Activated B cell treated with CpG ODN at 0.5 μM for 24 hours (primary cell): ENCODE measurements at regions of chr4 and their contacts with region 1.

Region 1: GRCh38 chr4:20395160-20395773 is 143.6 kb downstream of the SLIT2 start:
- DNase-seq: no peak
- ATAC-seq: no peak
- H3K4me3 Mint-ChIP-seq: no peak overlapping the region
- H3K27ac Mint-ChIP-seq: no peak overlapping the region
- H3K4me1 Mint-ChIP-seq: no peaks in the 10 kb centered on the region
- H3K27me3 Mint-ChIP-seq: no peaks in the 10 kb centered on the region
- CTCF ChIP-seq: no peak

Region 2: DNA sequence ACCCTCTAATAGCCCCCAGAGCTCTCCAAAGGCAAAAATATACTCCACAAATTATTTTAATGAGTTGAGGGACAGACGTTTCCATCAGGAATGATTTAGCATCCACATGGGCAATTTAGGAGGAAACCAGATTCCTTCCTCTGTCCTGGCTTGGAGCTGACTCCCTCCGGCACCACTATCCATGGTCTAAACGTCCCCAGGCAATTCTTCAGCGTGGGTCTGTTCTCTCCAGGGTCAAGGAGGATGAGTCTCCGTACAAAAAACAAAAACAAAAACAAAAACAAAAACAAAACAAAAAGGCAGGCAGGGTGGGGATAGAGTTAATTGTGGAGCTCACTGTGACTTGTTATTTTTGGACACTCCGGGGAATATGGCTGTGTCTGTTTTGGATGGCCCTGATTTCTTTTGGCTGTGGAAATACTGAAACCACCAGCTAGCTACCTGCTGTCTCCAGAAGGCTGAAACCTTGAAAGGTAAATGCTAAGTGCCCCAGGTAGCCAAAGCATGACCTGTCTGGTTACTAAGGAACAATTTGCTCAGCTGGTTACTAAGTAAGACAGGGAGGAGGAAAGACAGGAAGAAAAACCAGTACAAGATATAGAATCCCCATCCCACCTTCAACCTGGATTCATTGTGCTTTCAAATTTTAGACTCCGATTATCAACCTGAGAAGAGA is 1954.6 kb before region 1 on chr4:
- CTCF ChIA-PET with region 1: no interaction called
- POLR2A ChIA-PET with region 1: no interaction called
- intact Hi-C with region 1: no loop called
- DNase-seq: no peak
- ATAC-seq: no peak
- H3K4me3 Mint-ChIP-seq: no peak overlapping the region
- H3K27ac Mint-ChIP-seq: no peak overlapping the region
- H3K4me1 Mint-ChIP-seq: no peaks in the 10 kb centered on the region
- H3K27me3 Mint-ChIP-seq: no peaks in the 10 kb centered on the region
- CTCF ChIP-seq: no peak

Region 3: GRCh38 chr4:20086799-20087521 is 308.3 kb before region 1 on chr4:
- CTCF ChIA-PET with region 1: no interaction called
- POLR2A ChIA-PET with region 1: no interaction called
- intact Hi-C with region 1: no loop called
- DNase-seq: no peak
- ATAC-seq: no peak
- H3K4me3 Mint-ChIP-seq: no peak overlapping the region
- H3K27ac Mint-ChIP-seq: no peak overlapping the region
- H3K4me1 Mint-ChIP-seq: no peaks in the 10 kb centered on the region
- H3K27me3 Mint-ChIP-seq: no peaks in the 10 kb centered on the region
- CTCF ChIP-seq: no peak

Region 4: DNA sequence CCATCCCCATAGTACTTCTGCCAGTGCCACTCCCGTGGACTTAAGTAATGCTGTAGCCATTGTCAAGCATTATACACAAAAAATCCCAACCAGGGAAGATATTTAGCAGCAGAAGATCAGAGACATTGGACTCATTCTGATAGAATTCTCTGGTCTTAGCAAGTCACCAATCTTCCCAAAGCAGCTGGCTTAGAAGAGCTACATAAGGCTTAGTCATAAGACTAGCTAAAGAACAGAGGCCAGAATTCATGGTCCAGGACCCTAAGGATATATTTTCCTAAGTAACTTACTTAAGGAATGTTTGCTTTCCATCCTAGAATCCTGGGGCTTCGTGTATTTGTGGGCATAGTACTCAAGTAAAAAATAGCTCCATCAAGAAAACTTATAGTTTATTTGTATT is 243.8 kb before region 1 on chr4:
- CTCF ChIA-PET with region 1: no interaction called
- POLR2A ChIA-PET with region 1: no interaction called
- intact Hi-C with region 1: no loop called
- DNase-seq: no peak
- ATAC-seq: no peak
- H3K4me3 Mint-ChIP-seq: no peak overlapping the region
- H3K27ac Mint-ChIP-seq: no peak overlapping the region
- H3K4me1 Mint-ChIP-seq: no peaks in the 10 kb centered on the region
- H3K27me3 Mint-ChIP-seq: no peaks in the 10 kb centered on the region
- CTCF ChIP-seq: no peak

Region 5: GRCh38 chr4:20684852-20685763 is 289.8 kb after region 1 on chr4:
- CTCF ChIA-PET with region 1: interaction called, 6 read pairs
- POLR2A ChIA-PET with region 1: no interaction called
- intact Hi-C with region 1: loop called (anchors 1 kb)
- DNase-seq: no peak
- ATAC-seq: no peak
- H3K4me3 Mint-ChIP-seq: no peak overlapping the region
- H3K27ac Mint-ChIP-seq: no peak overlapping the region
- H3K4me1 Mint-ChIP-seq: no peaks in the 10 kb centered on the region
- H3K27me3 Mint-ChIP-seq: peaks cover 7% of the 10 kb centered on the region
- CTCF ChIP-seq: peak; percentile 89